ENCODE measurements at regions of chr4 and their contacts with region 1.

Region 1: GRCh38 chr4:105234582-105234981 is 87.9 kb downstream of the TET2 start:
- DNase-seq: no peak
- H3K4me3 Mint-ChIP-seq: no peak overlapping the region
- H3K27ac Mint-ChIP-seq: no peak overlapping the region
- H3K4me1 Mint-ChIP-seq: no peaks in the 10 kb centered on the region
- H3K27me3 Mint-ChIP-seq: no peaks in the 10 kb centered on the region
- CTCF ChIP-seq: no peak

Region 2: GRCh38 chr4:105191621-105192210 is 42.9 kb before region 1 on chr4:
- CTCF ChIA-PET with region 1: interaction called, 10 read pairs
- POLR2A ChIA-PET with region 1: no interaction called
- intact Hi-C with region 1: no loop called
- DNase-seq: peak; percentile 13
- H3K4me3 Mint-ChIP-seq: no peak overlapping the region
- H3K27ac Mint-ChIP-seq: no peak overlapping the region
- H3K4me1 Mint-ChIP-seq: peaks cover 30% of the 10 kb centered on the region
- H3K27me3 Mint-ChIP-seq: no peaks in the 10 kb centered on the region
- CTCF ChIP-seq: no peak

Region 3: DNA sequence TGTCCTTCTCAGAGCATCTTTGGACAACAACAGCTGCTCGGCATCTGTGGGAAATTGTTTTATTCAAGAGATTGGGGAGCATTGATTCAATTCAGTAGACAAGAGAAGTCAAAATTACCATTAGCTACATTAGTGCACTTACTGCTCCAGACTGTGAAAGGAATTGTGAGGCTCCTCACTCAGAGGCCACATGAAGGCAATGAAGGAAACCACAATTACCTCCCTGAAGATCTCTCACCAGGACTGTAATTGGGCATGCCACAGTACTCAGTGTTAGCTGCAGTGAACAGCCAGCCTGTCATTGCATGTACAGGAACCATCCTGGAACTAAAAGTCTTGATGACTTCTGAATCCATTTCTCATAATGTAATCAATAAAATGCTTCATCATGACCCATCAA is 94.5 kb after region 1 on chr4:
- CTCF ChIA-PET with region 1: no interaction called
- POLR2A ChIA-PET with region 1: no interaction called
- intact Hi-C with region 1: no loop called
- DNase-seq: no peak
- H3K4me3 Mint-ChIP-seq: no peak overlapping the region
- H3K27ac Mint-ChIP-seq: no peak overlapping the region
- H3K4me1 Mint-ChIP-seq: no peaks in the 10 kb centered on the region
- H3K27me3 Mint-ChIP-seq: no peaks in the 10 kb centered on the region
- CTCF ChIP-seq: no peak